AG04450 (cell line): ENCODE measurements at regions of chr4 and their contacts with region 1.

Region 1: DNA sequence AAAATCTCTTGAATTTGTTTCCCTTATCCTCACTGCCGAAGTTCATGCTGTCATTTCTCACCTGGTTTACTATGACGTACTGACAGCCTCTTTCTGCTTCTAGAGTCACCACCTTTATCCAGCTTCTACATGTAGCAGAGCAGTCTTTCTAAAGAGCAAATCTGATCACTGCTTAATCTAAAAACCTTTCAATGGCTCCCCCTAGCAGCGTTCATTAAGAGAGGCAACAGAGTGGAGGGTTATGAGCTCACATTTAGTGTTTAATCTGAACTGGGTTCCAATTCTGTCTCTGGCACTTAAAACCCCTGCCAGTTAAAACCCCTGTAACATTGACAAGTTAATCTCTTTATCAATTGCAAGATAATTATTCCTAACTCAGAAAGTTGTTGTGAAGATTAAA is 4.4 kb downstream of the RBPJ start:
- DNase-seq: no peak
- H3K4me3 ChIP-seq: no peak overlapping the region
- H3K27ac ChIP-seq: no peak overlapping the region
- H3K27me3 ChIP-seq: no peaks in the 10 kb centered on the region
- CTCF ChIP-seq: peak; percentile 60

Region 2: DNA sequence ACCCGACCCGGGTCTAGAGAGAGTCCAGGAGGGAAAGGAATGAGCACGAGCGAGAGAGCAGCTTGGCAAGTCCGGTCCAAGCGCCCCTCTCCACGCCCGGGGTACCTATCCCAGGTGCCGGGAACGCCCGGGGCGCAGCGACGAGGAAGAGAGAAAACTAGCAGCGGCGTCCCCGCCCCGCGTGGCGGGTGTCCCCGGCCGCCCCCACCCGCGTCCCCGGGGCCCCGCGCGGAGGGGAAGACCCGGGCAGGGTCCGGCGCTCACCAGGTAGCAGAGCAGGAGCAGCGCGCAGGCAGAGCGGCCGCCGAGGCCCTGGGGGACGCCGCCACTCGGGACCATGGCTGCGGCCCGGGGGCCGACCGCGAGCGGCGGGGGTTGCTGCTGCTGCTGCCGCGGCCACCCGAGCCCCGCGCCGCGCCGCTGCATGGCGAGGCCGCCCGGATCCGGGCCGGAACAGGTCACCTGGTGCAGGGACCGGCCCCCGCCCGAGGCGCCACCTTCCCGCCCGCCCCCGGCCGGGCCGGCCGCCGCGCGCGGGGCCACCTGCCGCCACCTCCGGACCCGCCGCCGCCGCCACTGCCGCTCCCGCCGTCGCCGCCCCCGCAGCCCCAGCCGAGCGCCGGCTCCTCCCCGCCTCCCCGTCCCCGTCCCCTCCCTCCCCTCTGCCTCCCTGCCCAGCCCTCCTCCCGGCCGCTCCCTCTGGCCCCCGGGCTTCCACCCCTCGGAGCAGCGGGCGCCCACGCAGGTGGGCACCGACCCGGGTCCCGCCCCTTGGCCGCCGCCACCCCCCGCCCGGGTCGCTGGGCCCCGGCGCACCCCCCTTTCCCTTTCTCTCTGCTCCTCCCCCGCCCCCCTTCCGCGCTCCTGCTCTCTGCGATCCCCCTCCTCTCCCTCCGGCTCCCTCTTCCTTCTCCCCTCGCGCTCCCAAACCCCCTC is 462.5 kb before region 1 on chr4 and contains the start of gene SEL1L3:
- CTCF ChIA-PET with region 1: interaction called, 10 read pairs
- POLR2A ChIA-PET with region 1: no interaction called
- DNase-seq: no peak
- H3K4me3 ChIP-seq: peak within 1 kb of the TSS; percentile 76
- H3K27ac ChIP-seq: no peak within 1 kb of the TSS
- H3K27me3 ChIP-seq: peaks cover 3% of the 10 kb centered on the region
- CTCF ChIP-seq: no peak
- polyA plus RNA-seq, gene SEL1L3: 38.7 and 44.2 TPM in 2 replicates

Region 3: DNA sequence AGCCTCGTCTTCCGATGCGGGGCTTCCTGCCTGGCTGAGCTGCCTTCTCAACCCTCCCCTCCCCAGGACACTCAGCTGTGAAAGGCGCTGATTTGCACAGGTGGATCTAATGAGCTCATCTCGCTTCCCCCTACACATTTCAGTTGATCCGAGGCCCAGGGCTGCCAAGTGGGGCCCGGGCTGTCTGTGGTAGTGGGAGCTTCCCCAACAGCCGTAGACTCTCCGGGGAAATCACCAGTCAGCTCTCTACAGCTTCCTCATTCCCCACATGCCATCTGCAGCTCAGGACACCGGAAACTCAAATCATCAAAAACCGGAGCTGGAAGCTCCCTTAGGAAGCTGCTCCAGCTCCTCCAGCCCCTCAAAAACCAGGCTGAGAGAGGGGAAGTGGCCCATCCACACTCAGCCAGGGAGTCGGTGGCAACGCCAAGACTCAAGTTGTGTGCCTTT is 354.9 kb before region 1 on chr4:
- CTCF ChIA-PET with region 1: no interaction called
- POLR2A ChIA-PET with region 1: no interaction called
- DNase-seq: no peak
- H3K4me3 ChIP-seq: no peak overlapping the region
- H3K27ac ChIP-seq: no peak overlapping the region
- H3K27me3 ChIP-seq: peaks cover 3% of the 10 kb centered on the region
- CTCF ChIP-seq: no peak

Region 4: DNA sequence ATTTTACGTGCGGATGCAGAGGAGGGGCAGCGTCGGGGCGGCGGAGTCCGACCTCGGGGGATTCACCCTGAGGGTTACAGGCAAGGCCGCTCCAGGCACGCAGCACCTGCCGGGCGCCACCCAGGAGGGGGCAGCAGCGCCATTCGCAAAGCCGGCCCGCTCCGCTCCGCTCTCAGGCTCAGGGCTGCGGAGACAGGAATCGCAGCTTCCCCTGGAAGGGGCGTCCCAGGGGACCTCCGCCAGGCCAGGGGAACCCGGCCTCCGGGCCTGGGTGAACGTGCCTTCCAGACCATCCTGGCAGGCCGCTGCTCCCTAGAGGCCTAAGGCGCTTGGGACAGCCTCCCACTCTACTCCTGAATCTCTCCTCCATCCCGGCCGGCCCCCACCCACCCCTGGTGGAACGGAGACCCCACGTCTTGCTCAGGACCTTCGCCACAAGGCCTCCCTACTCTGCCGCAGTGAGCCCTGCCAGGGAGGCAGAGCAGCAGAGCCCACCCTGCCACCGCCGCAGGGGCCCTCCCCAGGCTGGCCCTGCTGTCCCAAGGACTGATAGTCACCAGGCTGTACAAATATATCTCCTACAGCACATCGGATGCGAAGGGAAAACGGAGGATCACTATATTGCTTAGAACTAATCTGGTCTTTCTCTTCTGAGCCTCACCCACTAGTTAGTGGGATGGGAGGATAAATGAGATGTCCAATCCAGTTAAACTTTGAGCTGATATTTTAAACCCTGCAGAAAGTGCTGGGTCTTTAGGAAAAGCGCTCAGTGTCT is 296.2 kb before region 1 on chr4:
- CTCF ChIA-PET with region 1: interaction called, 20 read pairs
- POLR2A ChIA-PET with region 1: interaction called, 3 read pairs
- DNase-seq: peak; percentile 23
- H3K4me3 ChIP-seq: 0 out of 2 replicates have a peak overlapping the region, but pooled peaks have one; percentile 10
- H3K27ac ChIP-seq: no peak overlapping the region
- H3K27me3 ChIP-seq: no peaks in the 10 kb centered on the region
- CTCF ChIP-seq: peak; percentile 88

Region 5: GRCh38 chr4:26081795-26082498 is 243.2 kb before region 1 on chr4:
- CTCF ChIA-PET with region 1: interaction called, 11 read pairs
- POLR2A ChIA-PET with region 1: interaction called, 9 read pairs
- DNase-seq: no peak
- H3K4me3 ChIP-seq: no peak overlapping the region
- H3K27ac ChIP-seq: no peak overlapping the region
- H3K27me3 ChIP-seq: no peaks in the 10 kb centered on the region
- CTCF ChIP-seq: peak; percentile 67